Heart left ventricle (tissue), 16 donors: ENCODE measurements at regions of chr2 and their contacts with region 1.

Region 1: DNA sequence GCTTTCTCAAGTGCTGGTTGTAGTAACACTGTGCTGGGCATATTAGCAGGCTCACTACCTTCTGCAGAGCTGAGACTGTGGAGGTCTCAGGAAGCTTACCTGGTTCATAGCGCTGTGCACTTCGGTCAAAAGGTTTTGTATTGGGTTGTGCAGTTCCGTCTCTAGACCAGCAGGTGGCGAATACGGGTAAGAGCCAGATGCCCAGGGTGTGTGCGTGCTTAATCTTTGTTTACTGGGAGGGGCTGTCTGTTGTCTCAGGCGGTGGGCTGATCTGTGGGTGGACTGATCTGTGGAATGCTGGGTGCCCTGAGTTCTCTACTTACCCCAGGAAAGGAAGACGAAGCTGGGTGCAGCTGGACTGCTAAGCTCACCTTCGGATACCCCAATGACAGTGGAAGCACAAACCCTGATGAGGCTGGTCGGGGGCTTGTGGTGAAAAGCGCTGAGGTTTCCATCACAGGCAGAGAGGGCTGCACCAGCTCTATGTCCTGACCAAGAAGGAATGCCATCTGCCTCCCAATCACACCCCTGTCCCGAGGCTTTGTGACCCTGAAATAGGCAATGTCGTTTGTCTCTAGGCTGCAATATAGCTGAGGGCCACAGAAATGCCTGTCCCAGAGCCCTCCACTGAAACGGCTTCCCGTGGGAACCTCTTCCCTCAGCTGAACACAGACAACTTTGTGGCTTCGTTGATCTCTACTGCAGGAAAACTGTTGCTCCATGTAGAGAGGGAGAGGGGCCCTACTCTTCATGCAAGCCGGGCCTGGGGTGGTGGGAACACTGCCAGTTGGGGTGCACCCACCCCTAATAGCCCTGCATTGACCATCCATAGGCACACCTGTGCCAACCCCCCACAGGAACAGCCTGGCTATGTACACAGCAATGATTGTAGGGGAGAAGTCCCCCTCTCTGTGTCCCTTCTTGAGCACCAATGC is 45.9 kb upstream of the FAM117B start:
- DNase-seq: peak; percentile 54 to 75 (median 61)
- ATAC-seq: peak; percentile 50 to 91 (median 90)
- H3K4me3 ChIP-seq: peak overlapping the region in 8 of 12 donors; percentile 0 to 34 (median 24)
- H3K27ac ChIP-seq: no peak overlapping the region
- H3K4me1 ChIP-seq: peaks cover 0 to 18% (median 8%) of the 10 kb centered on the region in 12 donors
- H3K27me3 ChIP-seq: no peaks in the 10 kb centered on the region
- CTCF ChIP-seq: peak; percentile 87 to 96 (median 91)
- POLR2A ChIP-seq: no peak

Region 2: GRCh38 chr2:202628646-202629198 is 39.8 kb after region 1 on chr2:
- intact Hi-C with region 1: loop called in 2 of 10 experiments (anchors 5 to 10 kb)
- DNase-seq: no peak
- ATAC-seq: no peak
- H3K4me3 ChIP-seq: no peak overlapping the region
- H3K27ac ChIP-seq: no peak overlapping the region
- H3K4me1 ChIP-seq: peaks cover 0 to 12% (median 8%) of the 10 kb centered on the region in 12 donors
- H3K27me3 ChIP-seq: no peaks in the 10 kb centered on the region
- CTCF ChIP-seq: no peak
- POLR2A ChIP-seq: no peak

Region 3: DNA sequence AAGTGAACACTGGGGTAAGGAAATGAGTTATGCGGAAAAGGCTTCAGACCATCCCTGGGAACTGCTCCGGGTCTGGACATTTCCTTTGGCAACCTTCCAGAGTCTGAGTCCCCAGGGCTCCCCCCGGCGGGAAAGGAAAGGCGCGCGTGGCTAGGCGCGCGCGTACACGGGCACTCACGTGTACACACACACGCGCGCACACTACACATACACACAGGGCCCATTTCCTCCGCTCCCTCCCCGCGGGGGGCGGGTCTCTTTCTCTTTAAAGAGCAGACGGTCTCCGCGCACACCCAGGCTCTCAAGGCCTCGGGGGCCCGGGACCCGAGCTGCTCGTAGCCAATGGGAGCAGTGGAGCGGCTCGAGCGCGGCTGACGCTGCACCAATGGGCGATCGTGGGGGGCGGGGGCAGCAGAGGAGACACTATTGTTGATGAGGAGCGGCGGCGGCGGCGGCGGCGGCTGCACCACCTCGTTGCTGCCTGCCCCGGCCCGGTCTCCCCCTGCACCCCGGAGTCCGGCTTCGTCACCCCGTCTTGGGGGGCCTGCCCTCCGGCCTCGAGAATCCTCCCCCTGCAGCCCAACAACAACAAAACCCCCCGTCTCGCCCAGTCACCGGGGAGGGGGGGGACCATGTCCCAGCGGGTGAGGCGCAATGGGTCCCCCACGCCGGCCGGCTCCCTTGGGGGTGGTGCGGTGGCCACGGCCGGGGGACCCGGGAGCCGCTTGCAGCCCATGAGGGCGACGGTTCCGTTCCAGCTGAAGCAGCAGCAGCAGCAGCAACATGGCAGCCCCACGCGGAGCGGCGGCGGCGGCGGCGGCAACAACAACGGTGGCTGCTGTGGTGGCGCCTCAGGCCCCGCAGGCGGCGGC is 45.9 kb after region 1 on chr2 and contains the start of gene FAM117B:
- intact Hi-C with region 1: loop called in 5 of 10 experiments (anchors 2 to 10 kb)
- DNase-seq: peak; percentile 98 to 100 (median 99)
- ATAC-seq: peak; percentile 99
- H3K4me3 ChIP-seq: peak within 1 kb of the TSS; percentile 72 to 99 (median 96)
- H3K27ac ChIP-seq: peak within 1 kb of the TSS; percentile 60 to 96 (median 90)
- H3K4me1 ChIP-seq: peaks cover 0 to 27% (median 14%) of the 10 kb centered on the region in 12 donors
- H3K27me3 ChIP-seq: no peaks in the 10 kb centered on the region
- CTCF ChIP-seq: peak in 1 of 12 donors; percentile 13
- POLR2A ChIP-seq: peak in 1 of 2 donors; percentile 85
- total RNA-seq, gene FAM117B: 0.88 to 6.1 (median 2.9) TPM

Region 4: GRCh38 chr2:202870431-202871299 is 281.8 kb after region 1 on chr2:
- intact Hi-C with region 1: loop called in 7 of 10 experiments (anchors 2 to 10 kb)
- DNase-seq: peak; percentile 49 to 70 (median 50)
- ATAC-seq: peak; percentile 53 to 90 (median 78)
- H3K4me3 ChIP-seq: peak overlapping the region; percentile 69 to 92 (median 84)
- H3K27ac ChIP-seq: peak overlapping the region; percentile 7 to 87 (median 76)
- H3K4me1 ChIP-seq: peaks cover 0 to 13% (median 5%) of the 10 kb centered on the region in 12 donors
- H3K27me3 ChIP-seq: no peaks in the 10 kb centered on the region
- CTCF ChIP-seq: peak in 11 of 12 donors; percentile 9 to 54 (median 31)
- POLR2A ChIP-seq: no peak

Region 5: GRCh38 chr2:202883987-202884675 is 295.2 kb after region 1 on chr2:
- intact Hi-C with region 1: loop called in 3 of 10 experiments (anchors 10 kb)
- DNase-seq: no peak
- ATAC-seq: no peak
- H3K4me3 ChIP-seq: no peak overlapping the region
- H3K27ac ChIP-seq: no peak overlapping the region
- H3K4me1 ChIP-seq: peaks cover 0 to 8% (median 0%) of the 10 kb centered on the region in 12 donors
- H3K27me3 ChIP-seq: no peaks in the 10 kb centered on the region
- CTCF ChIP-seq: no peak
- POLR2A ChIP-seq: no peak

Region 6: GRCh38 chr2:202911512-202912341 is 322.8 kb after region 1 on chr2 and contains the starts of genes CARF and WDR12:
- intact Hi-C with region 1: loop called in 1 of 10 experiments (anchors 5 kb)
- DNase-seq: peak; percentile 94 to 96 (median 94)
- ATAC-seq: peak; percentile 97 to 98 (median 98)
- H3K4me3 ChIP-seq: peak within 1 kb of the TSS; percentile 61 to 85 (median 70)
- H3K27ac ChIP-seq: peak within 1 kb of the TSS; percentile 71 to 98 (median 86)
- H3K4me1 ChIP-seq: peaks cover 0 to 29% (median 17%) of the 10 kb centered on the region in 12 donors
- H3K27me3 ChIP-seq: no peaks in the 10 kb centered on the region
- CTCF ChIP-seq: no peak
- POLR2A ChIP-seq: peak in 1 of 2 donors; percentile 55
- total RNA-seq, gene CARF: 2.2 to 12.2 (median 7.4) TPM
- total RNA-seq, gene WDR12: 12.9 to 56.3 (median 42.3) TPM